ENCODE measurements at regions of chr13 and their contacts with region 1.

Region 1: DNA sequence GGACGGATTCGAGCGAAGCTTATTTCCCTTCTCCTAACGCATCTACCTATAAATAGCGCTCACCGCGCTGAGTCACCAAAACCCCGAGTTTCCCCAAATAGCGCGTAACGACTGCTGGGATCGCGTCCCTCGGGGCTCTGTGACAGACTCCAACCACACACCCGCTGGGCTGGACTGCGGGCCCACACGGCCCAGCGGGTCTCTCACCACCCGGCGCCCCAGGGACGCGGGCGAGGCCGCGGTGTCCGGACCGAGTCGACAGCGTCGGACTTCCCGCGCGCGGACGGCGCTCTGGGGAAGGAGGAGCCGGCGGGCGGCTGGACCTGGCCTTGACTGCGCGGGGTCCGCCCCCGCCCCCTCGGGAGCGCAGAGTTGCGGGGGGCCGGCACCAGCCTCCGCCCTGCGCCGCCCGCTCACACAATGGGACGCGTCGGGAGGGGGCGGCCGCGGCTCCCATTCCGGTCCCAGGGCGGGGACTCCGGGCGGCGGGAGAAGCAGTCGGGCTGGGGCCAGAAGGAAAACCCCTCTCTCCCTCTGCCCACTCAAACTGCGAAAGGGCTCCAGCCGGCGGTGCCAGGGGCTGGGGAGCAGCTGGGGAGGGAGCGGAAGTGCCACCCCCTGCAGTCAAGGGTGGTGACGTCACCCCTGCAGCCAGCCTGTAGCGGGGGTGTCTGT is 108.8 kb downstream of the KCNRG start:
- DNase-seq: peak; percentile 90 to 99
- ATAC-seq: peak; percentile 68 to 70
- H3K4me3 ChIP-seq: peak overlapping the region; percentile 84 to 99 (median 90)
- H3K27ac ChIP-seq: peak overlapping the region; percentile 98 to 100 (median 99)
- H3K4me1 ChIP-seq: peaks cover 48 to 49% of the 10 kb centered on the region in 2 donors
- H3K27me3 ChIP-seq: no peaks in the 10 kb centered on the region
- CTCF ChIP-seq: peak in 1 of 5 experiments; percentile 36
- POLR2A ChIP-seq: peak; percentile 97

Region 2: DNA sequence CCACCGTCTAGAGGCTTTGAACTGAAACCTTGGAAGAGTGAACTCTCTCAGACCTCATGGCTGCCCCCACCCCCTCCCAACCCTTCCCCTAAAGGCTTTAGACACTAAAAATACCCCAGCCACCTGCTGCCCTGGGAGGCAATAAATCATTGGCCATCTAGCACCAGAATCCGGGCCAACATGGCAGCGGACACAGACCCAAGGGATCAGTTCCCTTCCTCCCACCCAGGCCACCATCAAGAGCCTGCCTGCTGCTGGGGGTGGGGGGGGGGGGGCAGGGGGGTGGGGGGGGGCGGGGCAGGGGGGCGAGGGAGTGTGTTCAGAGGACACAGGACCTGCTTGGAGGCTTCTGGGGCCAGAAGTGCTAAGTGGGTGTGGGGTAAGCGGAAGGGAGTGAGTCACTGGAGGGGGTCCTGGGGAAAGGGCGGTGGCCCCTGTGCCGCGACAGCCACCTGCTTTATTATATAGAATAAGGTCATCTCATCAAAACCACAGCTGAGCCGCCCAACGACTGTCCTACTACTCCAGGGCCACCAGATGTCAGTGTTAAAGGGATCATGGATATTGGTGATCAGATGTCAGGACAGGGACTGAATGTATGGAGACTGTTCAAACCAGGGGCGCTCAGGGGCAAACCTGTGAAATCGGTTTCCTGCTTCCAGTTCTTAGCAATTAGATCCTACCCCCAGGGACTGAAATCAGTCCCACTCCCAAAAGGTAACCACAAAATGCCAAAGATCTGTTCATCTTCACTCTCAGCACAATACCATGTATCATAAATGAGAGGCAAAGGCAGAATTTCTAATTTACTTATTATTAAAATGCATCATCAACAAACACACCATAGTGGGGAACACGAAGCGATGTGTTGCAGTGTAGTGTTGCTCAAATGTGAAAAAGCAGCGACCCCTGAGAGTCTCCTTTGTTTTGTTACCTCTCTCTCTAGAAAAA is 471.4 kb before region 1 on chr13:
- in situ Hi-C with region 1: no loop called
- intact Hi-C with region 1: loop called (anchors 1 kb)
- DNase-seq: peak; percentile 87 to 95
- ATAC-seq: peak; percentile 59 to 71
- H3K4me3 ChIP-seq: peak overlapping the region in 3 of 4 donors; percentile 25 to 38 (median 30)
- H3K27ac ChIP-seq: peak overlapping the region; percentile 95 to 98 (median 96)
- H3K4me1 ChIP-seq: peaks cover 80 to 81% of the 10 kb centered on the region in 2 donors
- H3K27me3 ChIP-seq: no peaks in the 10 kb centered on the region
- CTCF ChIP-seq: peak; percentile 61 to 78 (median 71)
- POLR2A ChIP-seq: no peak

Region 3: GRCh38 chr13:49996951-49997895 is 126.8 kb before region 1 on chr13 and contains the start of gene TRIM13:
- in situ Hi-C with region 1: loop called in 1 of 4 experiments (anchors 10 kb)
- intact Hi-C with region 1: loop called (anchors 1 kb)
- DNase-seq: peak; percentile 81 to 91
- ATAC-seq: peak; percentile 87 to 88
- H3K4me3 ChIP-seq: peak within 1 kb of the TSS; percentile 94 to 97 (median 96)
- H3K27ac ChIP-seq: peak within 1 kb of the TSS; percentile 99 to 100 (median 99)
- H3K4me1 ChIP-seq: peaks cover 46 to 47% of the 10 kb centered on the region in 2 donors
- H3K27me3 ChIP-seq: no peaks in the 10 kb centered on the region
- CTCF ChIP-seq: peak; percentile 59 to 81 (median 70)
- POLR2A ChIP-seq: peak; percentile 75 to 89
- total RNA-seq, gene TRIM13: 11.4 to 21.5 (median 19.1) TPM

Region 4: GRCh38 chr13:50075619-50076097 is 48.3 kb before region 1 on chr13:
- in situ Hi-C with region 1: no loop called
- intact Hi-C with region 1: no loop called
- DNase-seq: no peak
- ATAC-seq: no peak
- H3K4me3 ChIP-seq: no peak overlapping the region
- H3K27ac ChIP-seq: peak overlapping the region in 1 of 4 donors; percentile 20
- H3K4me1 ChIP-seq: peaks cover 43 to 49% of the 10 kb centered on the region in 2 donors
- H3K27me3 ChIP-seq: no peaks in the 10 kb centered on the region
- CTCF ChIP-seq: no peak
- POLR2A ChIP-seq: no peak

Region 5: DNA sequence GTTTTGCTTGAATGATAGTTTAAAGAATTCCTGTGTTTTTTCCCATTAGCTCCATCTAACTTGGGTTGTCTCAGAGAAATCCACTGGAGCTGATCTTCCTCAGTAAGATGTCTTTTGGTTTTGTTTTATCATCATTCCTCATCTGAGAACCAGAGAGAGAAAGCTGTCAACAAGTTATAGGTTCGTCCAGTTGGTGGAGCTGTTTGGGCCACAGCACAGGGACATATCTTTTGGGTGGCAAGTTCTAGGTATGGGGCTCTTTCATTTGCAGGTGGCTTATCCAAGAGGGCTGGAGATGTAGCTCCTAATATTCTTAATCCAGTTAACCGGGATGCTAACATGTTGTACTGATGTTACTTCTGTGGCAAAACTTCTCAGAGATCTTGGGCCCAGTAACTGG is 65.5 kb after region 1 on chr13:
- in situ Hi-C with region 1: no loop called
- intact Hi-C with region 1: no loop called
- DNase-seq: no peak
- ATAC-seq: no peak
- H3K4me3 ChIP-seq: no peak overlapping the region
- H3K27ac ChIP-seq: no peak overlapping the region
- H3K4me1 ChIP-seq: no peaks in the 10 kb centered on the region
- H3K27me3 ChIP-seq: no peaks in the 10 kb centered on the region
- CTCF ChIP-seq: no peak
- POLR2A ChIP-seq: no peak

Region 6: GRCh38 chr13:50222569-50223332 is 98.8 kb after region 1 on chr13:
- in situ Hi-C with region 1: no loop called
- intact Hi-C with region 1: loop called (anchors 5 kb)
- DNase-seq: peak; percentile 50 to 82
- ATAC-seq: peak; percentile 80 to 91
- H3K4me3 ChIP-seq: peak overlapping the region in 3 of 4 donors; percentile 6 to 30 (median 15)
- H3K27ac ChIP-seq: peak overlapping the region; percentile 1 to 16 (median 8)
- H3K4me1 ChIP-seq: peaks cover 0 to 5% of the 10 kb centered on the region in 2 donors
- H3K27me3 ChIP-seq: no peaks in the 10 kb centered on the region
- CTCF ChIP-seq: no peak
- POLR2A ChIP-seq: no peak

Region 7: GRCh38 chr13:50236898-50237318 is 112.9 kb after region 1 on chr13:
- in situ Hi-C with region 1: no loop called
- intact Hi-C with region 1: no loop called
- DNase-seq: no peak
- ATAC-seq: no peak
- H3K4me3 ChIP-seq: no peak overlapping the region
- H3K27ac ChIP-seq: no peak overlapping the region
- H3K4me1 ChIP-seq: no peaks in the 10 kb centered on the region
- H3K27me3 ChIP-seq: no peaks in the 10 kb centered on the region
- CTCF ChIP-seq: no peak
- POLR2A ChIP-seq: no peak

Region 8: GRCh38 chr13:50713523-50714248 is 589.7 kb after region 1 on chr13:
- in situ Hi-C with region 1: no loop called
- intact Hi-C with region 1: no loop called
- DNase-seq: no peak
- ATAC-seq: peak in 1 of 2 donors; percentile 36
- H3K4me3 ChIP-seq: no peak overlapping the region
- H3K27ac ChIP-seq: no peak overlapping the region
- H3K4me1 ChIP-seq: peaks cover 0 to 14% of the 10 kb centered on the region in 2 donors
- H3K27me3 ChIP-seq: no peaks in the 10 kb centered on the region
- CTCF ChIP-seq: no peak
- POLR2A ChIP-seq: no peak

Region 9: DNA sequence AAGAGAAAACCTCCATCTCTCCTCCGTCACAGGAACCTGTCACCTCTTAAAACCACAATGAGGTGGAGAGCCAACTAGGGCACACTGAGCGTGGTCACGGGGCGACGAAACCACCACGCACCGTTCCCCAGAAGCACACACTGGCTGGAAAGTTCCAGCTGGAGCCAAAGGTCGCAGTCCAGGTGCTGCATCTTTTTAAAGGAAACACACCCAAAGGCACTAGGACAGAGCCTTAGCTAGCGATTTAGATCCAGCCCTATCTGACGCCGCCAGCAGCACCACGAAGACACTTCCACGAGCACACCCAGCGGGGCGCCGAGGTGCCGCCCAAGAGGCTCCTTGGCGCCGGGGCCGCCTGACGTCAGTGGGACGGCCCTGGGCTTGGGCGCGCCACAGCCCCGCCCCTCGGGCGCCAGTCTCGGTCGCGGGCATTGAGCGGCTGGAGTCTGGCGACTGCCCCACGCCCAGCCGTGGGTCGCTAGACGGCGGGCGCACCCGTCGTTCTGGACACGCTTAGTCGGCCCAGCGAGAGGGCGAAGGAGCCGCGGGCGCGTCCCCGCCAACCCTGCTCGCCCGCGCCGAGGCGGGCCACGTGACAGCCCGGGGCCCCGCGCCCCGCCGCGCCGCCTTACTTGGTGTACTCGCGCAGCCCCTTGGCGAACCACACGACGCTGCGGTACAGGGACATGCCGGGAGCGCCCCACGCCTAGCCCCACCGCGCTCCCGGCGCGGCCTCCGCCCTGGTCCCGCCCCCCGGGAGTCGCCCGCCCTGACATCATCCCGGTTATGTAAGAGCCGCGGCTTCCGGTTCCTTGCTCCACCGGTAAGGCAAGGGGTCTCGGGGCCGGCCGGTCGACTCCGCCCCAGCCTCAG is 1679.7 kb after region 1 on chr13 and contains the start of gene DHRS12:
- in situ Hi-C with region 1: no loop called
- intact Hi-C with region 1: loop called (anchors 5 kb)
- DNase-seq: peak; percentile 68 to 85
- ATAC-seq: peak; percentile 81 to 87
- H3K4me3 ChIP-seq: peak within 1 kb of the TSS; percentile 74 to 99 (median 86)
- H3K27ac ChIP-seq: peak within 1 kb of the TSS; percentile 89 to 100 (median 96)
- H3K4me1 ChIP-seq: peaks cover 37 to 46% of the 10 kb centered on the region in 2 donors
- H3K27me3 ChIP-seq: no peaks in the 10 kb centered on the region
- CTCF ChIP-seq: peak in 1 of 5 experiments; percentile 4
- POLR2A ChIP-seq: peak; percentile 90 to 93
- total RNA-seq, gene DHRS12: 1.8 to 6.0 (median 4.7) TPM